HCT116 (cell line): ENCODE measurements at regions of chr4 and their contacts with region 1.

Region 1: DNA sequence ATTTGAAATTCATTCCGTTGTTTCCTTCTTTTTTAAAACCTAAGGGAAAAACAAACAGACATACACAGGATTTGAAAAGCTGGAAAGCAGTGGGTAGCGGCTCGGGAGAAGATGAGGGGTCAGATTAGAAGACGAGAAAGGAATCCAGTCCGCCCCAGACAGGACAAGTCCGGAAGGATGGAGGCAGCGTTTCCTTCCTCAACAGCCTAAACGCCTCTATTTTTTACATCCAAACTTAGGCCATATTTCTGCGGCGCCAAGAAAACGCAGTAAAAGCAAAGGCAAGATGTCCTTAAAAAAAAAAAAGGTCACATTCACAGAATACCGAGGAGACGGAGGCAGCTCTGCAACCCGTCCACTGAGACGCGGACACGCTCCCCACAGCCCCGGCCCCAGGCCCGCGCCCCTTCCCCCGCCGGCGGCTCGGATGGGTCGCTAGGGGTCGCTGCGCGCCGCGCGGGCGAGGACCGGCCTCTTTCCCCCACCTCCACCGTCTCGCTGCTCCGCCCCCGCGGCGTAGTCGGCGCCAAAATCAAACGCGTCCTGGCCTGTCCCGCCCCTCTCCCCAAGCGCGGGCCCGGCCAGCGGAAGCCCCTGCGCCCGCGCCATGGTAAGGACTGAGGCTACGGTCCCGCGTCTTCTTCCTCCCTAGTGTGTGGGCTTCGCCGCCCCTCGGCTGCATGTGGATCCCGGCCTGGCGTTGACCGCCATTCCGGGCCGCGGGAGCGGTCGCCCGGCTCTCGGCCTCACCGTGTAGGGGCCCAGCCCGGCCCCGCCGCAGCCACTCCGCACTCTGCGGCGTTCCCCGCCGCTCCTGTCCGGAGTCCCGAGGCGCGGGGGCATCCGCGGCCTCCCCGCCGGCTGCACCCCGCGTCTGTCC is at the start of gene MND1:
- DNase-seq: peak; percentile 68
- ATAC-seq: peak; percentile 89
- H3K4me3 ChIP-seq: peak within 1 kb of the TSS; percentile 67 to 78
- H3K27ac ChIP-seq: peak within 1 kb of the TSS; percentile 79
- H3K4me1 ChIP-seq: peaks cover 18 to 37% of the 10 kb centered on the region in 2 experiments
- H3K27me3 ChIP-seq: no peaks in the 10 kb centered on the region
- CTCF ChIP-seq: peak; percentile 66 to 84 (median 81)
- POLR2A ChIP-seq: peak; percentile 1
- RAD21 ChIP-seq: peak; percentile 86
- total RNA-seq, gene MND1: 29.9 TPM

Region 2: GRCh38 chr4:153432968-153433753 is 88.8 kb after region 1 on chr4:
- CTCF ChIA-PET with region 1: interaction called, 3 read pairs
- POLR2A ChIA-PET with region 1: no interaction called
- RAD21 ChIA-PET with region 1: interaction called in 1 of 2 experiments, 5 read pairs
- intact Hi-C with region 1: loop called (anchors 5 kb)
- DNase-seq: peak; percentile 77
- ATAC-seq: peak; percentile 90
- H3K4me3 ChIP-seq: peak overlapping the region in 1 of 2 experiments; percentile 32; a peak in 2 of 4 replicates
- H3K27ac ChIP-seq: peak overlapping the region; percentile 44; the same call in 1 of the 2 replicates
- H3K4me1 ChIP-seq: peaks cover 14 to 19% of the 10 kb centered on the region in 2 experiments
- H3K27me3 ChIP-seq: no peaks in the 10 kb centered on the region
- CTCF ChIP-seq: peak; percentile 75 to 92 (median 85)
- POLR2A ChIP-seq: no peak
- RAD21 ChIP-seq: peak; percentile 98

Region 3: GRCh38 chr4:153643406-153644383 is 299.3 kb after region 1 on chr4:
- CTCF ChIA-PET with region 1: interaction called, 7 read pairs
- POLR2A ChIA-PET with region 1: no interaction called
- RAD21 ChIA-PET with region 1: no interaction called
- intact Hi-C with region 1: loop called (anchors 2 kb)
- DNase-seq: peak; percentile 46
- ATAC-seq: peak; percentile 90
- H3K4me3 ChIP-seq: no peak overlapping the region
- H3K27ac ChIP-seq: no peak overlapping the region
- H3K4me1 ChIP-seq: 0 out of 4 replicates have a peak, but pooled peaks cover 0 to 5% of the 10 kb centered on the region in 2 experiments
- H3K27me3 ChIP-seq: no peaks in the 10 kb centered on the region
- CTCF ChIP-seq: peak; percentile 32 to 71 (median 63); a peak in 5 of 6 replicates
- POLR2A ChIP-seq: no peak
- RAD21 ChIP-seq: peak; percentile 75